ENCODE measurements at regions of chr9 and their contacts with region 1.

Region 1: DNA sequence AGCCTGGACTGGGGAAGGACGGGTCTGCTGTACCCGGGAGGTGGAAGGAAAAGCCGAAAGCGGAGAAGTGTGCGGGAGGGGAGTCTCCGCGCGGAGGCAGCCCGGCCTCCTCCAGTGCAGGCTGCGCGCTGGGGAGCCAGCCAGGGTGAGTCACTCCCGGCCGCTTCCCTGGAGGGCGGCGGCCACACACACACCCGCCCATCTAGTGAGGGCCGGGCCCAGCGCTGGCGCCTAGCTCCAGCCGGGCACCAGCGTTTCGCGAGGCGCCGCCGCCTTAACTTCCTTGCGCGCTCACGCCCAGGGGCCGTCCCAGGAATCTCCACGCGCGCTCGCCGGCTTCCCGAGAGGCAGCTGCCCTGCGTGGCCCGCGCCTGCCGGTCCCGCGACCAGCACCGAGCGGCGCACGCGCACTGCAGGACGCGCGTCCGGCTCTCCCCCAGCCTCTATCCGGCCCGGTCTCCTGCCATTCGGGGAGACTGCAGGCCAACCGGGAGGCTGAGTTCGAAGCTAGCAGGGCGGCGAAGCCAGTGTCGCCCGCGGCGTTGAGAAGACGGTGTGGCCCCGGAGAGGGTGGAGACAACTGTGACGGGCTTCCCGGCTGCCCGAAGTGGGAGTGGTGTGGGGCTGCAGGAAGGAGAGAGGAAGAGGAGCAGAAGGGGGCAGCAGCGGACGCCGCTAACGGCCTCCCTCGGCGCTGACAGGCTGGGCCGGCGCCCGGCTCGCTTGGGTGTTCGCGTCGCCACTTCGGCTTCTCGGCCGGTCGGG is at the start of gene JAK2:
- DNase-seq: peak; percentile 92
- H3K4me3 Mint-ChIP-seq: no peak within 1 kb of the TSS
- H3K27ac Mint-ChIP-seq: peak within 1 kb of the TSS; percentile 97
- H3K4me1 Mint-ChIP-seq: peaks cover 46% of the 10 kb centered on the region
- H3K27me3 Mint-ChIP-seq: no peaks in the 10 kb centered on the region
- total RNA-seq, gene JAK2: 46.8 to 51.0 TPM

Region 2: GRCh38 chr9:4382722-4383317 is 602.0 kb before region 1 on chr9:
- CTCF ChIA-PET with region 1: no interaction called
- intact Hi-C with region 1: loop called (anchors 5 kb)
- DNase-seq: peak; percentile 21
- H3K4me3 Mint-ChIP-seq: no peak overlapping the region
- H3K27ac Mint-ChIP-seq: no peak overlapping the region
- H3K4me1 Mint-ChIP-seq: peaks cover 1% of the 10 kb centered on the region
- H3K27me3 Mint-ChIP-seq: no peaks in the 10 kb centered on the region

Region 3: DNA sequence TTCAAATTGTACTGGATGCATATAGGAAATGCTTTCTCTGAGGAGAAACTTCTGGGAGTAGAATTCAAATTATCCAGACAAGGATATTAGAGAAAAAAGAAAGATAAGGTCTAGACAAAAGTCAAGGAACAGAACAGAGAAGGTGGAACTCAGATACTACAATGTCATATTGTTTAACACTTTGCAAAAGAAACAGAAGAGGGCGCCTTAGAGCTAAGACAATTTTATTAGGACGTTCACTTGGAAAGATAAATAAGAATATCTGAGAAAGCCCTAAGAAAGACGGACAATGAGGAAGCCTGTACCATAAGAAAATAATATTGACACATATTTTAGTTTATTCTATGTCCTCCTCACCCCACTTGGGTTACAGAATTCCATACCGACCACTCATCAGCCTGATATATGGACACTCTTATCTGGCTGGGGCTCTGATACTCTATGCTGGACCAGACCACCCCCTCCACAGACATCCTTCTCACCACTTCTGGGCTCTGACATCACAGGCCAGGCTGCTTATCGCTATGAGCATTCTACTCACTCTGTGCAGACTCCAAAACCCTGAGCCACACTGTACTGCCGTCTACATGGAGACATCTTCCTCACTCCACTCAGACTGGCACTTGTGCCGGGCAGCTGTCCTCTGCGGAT is 234.7 kb before region 1 on chr9:
- CTCF ChIA-PET with region 1: interaction called, 10 read pairs
- intact Hi-C with region 1: no loop called
- DNase-seq: no peak
- H3K4me3 Mint-ChIP-seq: no peak overlapping the region
- H3K27ac Mint-ChIP-seq: no peak overlapping the region
- H3K4me1 Mint-ChIP-seq: peaks cover 34% of the 10 kb centered on the region
- H3K27me3 Mint-ChIP-seq: no peaks in the 10 kb centered on the region

Region 4: GRCh38 chr9:4849364-4849763 is 135.4 kb before region 1 on chr9:
- CTCF ChIA-PET with region 1: interaction called, 4 read pairs
- intact Hi-C with region 1: loop called (anchors 1 kb)
- DNase-seq: no peak
- H3K4me3 Mint-ChIP-seq: no peak overlapping the region
- H3K27ac Mint-ChIP-seq: no peak overlapping the region
- H3K4me1 Mint-ChIP-seq: no peaks in the 10 kb centered on the region
- H3K27me3 Mint-ChIP-seq: no peaks in the 10 kb centered on the region

Region 5: DNA sequence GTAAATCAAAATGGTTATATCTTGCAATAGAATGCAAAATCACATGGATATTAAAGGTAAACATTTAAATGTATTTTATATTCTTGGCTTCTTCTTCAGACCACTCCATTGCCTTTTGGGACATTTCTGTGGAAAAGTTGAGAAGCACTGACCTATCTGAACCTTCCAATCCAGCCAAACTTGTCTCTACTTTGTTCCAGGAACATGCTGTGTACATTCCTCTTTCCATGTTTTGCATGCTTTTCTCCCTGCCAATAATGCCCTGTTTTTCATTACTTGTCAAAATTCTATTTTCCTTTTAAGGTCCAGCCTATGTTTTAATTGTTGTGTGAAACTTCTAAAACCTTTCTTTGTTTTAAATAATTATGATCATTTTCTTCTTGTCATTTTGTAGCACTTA is 28.6 kb after region 1 on chr9:
- CTCF ChIA-PET with region 1: no interaction called
- intact Hi-C with region 1: no loop called
- DNase-seq: no peak
- H3K4me3 Mint-ChIP-seq: no peak overlapping the region
- H3K27ac Mint-ChIP-seq: no peak overlapping the region
- H3K4me1 Mint-ChIP-seq: peaks cover 13% of the 10 kb centered on the region
- H3K27me3 Mint-ChIP-seq: no peaks in the 10 kb centered on the region

Region 6: GRCh38 chr9:5364294-5365024 is 379.7 kb after region 1 on chr9:
- CTCF ChIA-PET with region 1: no interaction called
- intact Hi-C with region 1: loop called (anchors 5 kb)
- DNase-seq: peak; percentile 22
- H3K4me3 Mint-ChIP-seq: no peak overlapping the region
- H3K27ac Mint-ChIP-seq: peak overlapping the region; percentile 35
- H3K4me1 Mint-ChIP-seq: peaks cover 25% of the 10 kb centered on the region
- H3K27me3 Mint-ChIP-seq: no peaks in the 10 kb centered on the region

Region 7: DNA sequence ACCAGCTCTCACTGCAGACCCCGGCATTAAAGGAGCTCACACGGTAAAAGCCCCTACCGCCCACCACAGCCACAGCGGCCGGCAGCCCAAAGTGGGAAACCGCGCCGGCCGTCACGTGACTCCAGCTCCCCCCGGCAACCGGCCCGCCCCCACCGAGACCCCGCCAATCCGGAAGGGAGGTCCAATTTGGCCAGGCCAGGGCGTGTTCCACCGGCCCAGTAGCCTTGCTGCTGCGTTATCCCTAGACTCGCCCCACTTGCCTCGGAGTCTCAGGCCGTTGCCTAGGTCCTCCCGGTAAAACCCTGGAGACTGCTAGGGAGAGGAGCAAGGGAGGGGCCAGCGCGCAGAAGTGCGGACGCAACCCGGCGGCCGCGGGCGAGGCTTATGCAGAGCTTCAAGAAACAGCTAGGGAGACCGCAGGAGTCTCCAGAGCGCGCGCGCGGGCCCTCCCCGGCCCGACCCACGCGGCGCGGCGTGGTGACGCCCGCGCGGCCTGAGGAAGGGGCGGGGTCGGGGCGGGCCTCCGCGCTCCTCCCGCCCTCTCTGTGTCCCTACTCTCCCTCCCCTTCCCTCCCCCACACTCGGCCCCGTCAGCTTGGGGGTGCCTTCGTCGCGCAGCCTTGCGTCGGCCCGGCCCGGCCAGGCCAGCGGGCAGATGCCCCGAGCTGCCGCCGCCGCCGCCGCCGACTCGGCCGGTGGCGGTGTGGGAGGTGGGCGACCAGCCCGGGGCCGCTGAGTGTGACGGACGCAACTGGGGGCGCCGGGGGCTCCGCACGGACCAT is 643.9 kb after region 1 on chr9 and contains the start of gene RIC1:
- CTCF ChIA-PET with region 1: no interaction called
- intact Hi-C with region 1: loop called (anchors 1 kb)
- DNase-seq: peak; percentile 90
- H3K4me3 Mint-ChIP-seq: peak within 1 kb of the TSS; percentile 99
- H3K27ac Mint-ChIP-seq: peak within 1 kb of the TSS; percentile 100
- H3K4me1 Mint-ChIP-seq: peaks cover 59% of the 10 kb centered on the region
- H3K27me3 Mint-ChIP-seq: no peaks in the 10 kb centered on the region
- total RNA-seq, gene RIC1: 14.5 to 16.4 TPM

Region 8: GRCh38 chr9:6757456-6758247 is 1772.8 kb after region 1 on chr9 and contains the start of gene KDM4C:
- CTCF ChIA-PET with region 1: no interaction called
- intact Hi-C with region 1: loop called (anchors 10 kb)
- DNase-seq: peak; percentile 93
- H3K4me3 Mint-ChIP-seq: peak within 1 kb of the TSS; percentile 86
- H3K27ac Mint-ChIP-seq: peak within 1 kb of the TSS; percentile 99
- H3K4me1 Mint-ChIP-seq: peaks cover 25% of the 10 kb centered on the region
- H3K27me3 Mint-ChIP-seq: no peaks in the 10 kb centered on the region
- total RNA-seq, gene KDM4C: 27.4 to 28.9 TPM

Region 9: GRCh38 chr9:6855860-6856259 is 1871.1 kb after region 1 on chr9:
- CTCF ChIA-PET with region 1: no interaction called
- intact Hi-C with region 1: no loop called
- DNase-seq: no peak
- H3K4me3 Mint-ChIP-seq: no peak overlapping the region
- H3K27ac Mint-ChIP-seq: no peak overlapping the region
- H3K4me1 Mint-ChIP-seq: no peaks in the 10 kb centered on the region
- H3K27me3 Mint-ChIP-seq: no peaks in the 10 kb centered on the region

Measured in activated naive CD4-positive, alpha-beta T cell treated with anti-CD3 and anti-CD28 coated beads for 36 hours (primary cell).